Activated CD4-positive, alpha-beta memory T cell treated with anti-CD3 and anti-CD28 coated beads, Interleukin-2, amount 10 ng/mL, durations not matched to agents 7 days and 5 days (primary cell): ENCODE measurements at regions of chr11 and their contacts with region 1.

Region 1: DNA sequence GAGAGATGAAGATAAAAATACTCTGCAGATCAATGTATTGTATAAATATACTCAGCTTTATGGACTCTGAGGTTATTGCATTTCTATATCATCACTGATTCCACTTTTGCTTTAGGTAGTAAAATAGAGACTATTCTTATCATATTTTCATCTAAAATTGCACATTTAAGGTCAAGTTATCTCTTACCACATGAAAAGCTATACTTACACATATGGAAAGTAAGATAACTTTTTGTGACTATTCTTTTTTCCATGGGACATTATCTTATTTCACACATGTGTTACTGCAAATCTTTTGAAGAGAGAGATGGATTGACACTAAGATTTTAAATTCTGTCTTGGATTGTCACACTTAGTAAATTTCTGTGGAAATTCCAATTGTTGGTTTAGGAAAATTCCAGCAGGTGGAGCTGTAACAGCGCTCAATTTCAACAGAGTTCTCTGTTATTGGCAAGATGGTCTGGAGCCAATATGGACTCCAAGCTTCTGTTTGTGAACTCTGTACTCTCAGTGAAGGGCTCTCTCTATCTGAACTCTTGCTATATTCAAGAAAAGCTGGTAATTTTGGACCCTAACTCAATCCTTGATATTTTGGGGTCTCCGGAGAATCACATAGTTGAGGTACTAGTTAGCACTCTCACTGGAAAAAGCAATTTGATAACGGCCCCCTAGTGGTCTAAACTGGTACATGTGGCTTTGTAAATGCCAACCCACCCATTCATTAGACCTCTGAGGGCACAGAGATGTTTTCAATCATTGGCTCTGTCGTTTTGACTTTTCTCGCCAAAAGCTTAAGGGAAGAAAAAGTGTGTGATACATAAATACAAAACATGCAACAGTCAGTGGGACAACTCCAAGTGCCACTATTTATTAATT is 429.7 kb downstream of the ETS1 start:
- DNase-seq: peak; percentile 52
- H3K4me3 Mint-ChIP-seq: peak overlapping the region; percentile 53
- H3K27ac Mint-ChIP-seq: peak overlapping the region; percentile 55
- H3K4me1 Mint-ChIP-seq: peaks cover 7% of the 10 kb centered on the region
- H3K27me3 Mint-ChIP-seq: peaks cover 8% of the 10 kb centered on the region

Region 2: DNA sequence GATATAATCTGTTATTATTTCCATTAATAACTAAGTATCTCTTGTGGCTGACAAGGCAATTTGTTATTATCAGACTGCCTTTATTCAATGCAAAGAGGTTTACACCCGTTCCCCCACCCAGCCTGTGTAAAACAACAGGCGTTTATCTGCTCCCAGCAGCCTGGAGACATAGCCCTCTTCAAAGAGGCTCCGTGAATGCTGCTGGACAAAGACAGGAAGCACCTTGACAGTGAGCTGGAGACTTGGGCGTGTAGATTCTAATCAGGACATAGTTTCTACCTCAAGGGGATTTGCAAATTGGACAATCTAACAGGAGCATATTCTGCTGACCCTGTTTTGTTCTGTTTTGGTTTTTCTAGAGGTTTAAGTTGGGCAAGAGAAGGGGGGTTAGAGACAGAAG is 424.1 kb before region 1 on chr11:
- CTCF ChIA-PET with region 1: no interaction called
- POLR2A ChIA-PET with region 1: no interaction called
- DNase-seq: no peak
- H3K4me3 Mint-ChIP-seq: no peak overlapping the region
- H3K27ac Mint-ChIP-seq: no peak overlapping the region
- H3K4me1 Mint-ChIP-seq: no peaks in the 10 kb centered on the region
- H3K27me3 Mint-ChIP-seq: no peaks in the 10 kb centered on the region

Region 3: DNA sequence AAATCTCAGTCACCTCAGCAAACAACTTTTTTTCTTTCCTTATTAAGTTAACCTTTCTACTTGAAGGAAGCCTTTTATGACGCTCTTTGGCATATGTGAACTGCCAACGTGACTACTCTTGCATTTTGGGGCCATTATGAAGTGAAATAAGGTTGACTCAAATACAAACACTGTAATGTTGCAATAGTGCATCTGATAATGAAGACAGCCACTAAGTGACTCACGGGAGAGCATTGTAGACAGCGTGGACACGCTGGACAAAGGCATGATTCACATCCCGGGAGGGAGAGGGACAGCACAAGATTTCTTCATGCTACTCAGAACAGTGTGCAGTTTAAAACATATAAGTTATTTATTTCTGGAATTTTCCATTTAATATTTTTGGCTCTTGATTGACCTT is 131.1 kb before region 1 on chr11:
- CTCF ChIA-PET with region 1: interaction called, 53 read pairs
- POLR2A ChIA-PET with region 1: no interaction called
- DNase-seq: no peak
- H3K4me3 Mint-ChIP-seq: no peak overlapping the region
- H3K27ac Mint-ChIP-seq: no peak overlapping the region
- H3K4me1 Mint-ChIP-seq: peaks cover 16% of the 10 kb centered on the region
- H3K27me3 Mint-ChIP-seq: peaks cover 20% of the 10 kb centered on the region

Region 4: GRCh38 chr11:128052912-128053641 is 104.6 kb before region 1 on chr11:
- CTCF ChIA-PET with region 1: interaction called, 14 read pairs
- POLR2A ChIA-PET with region 1: interaction called, 3 read pairs
- DNase-seq: no peak
- H3K4me3 Mint-ChIP-seq: peak overlapping the region; percentile 53
- H3K27ac Mint-ChIP-seq: peak overlapping the region; percentile 83
- H3K4me1 Mint-ChIP-seq: peaks cover 52% of the 10 kb centered on the region
- H3K27me3 Mint-ChIP-seq: no peaks in the 10 kb centered on the region

Region 5: DNA sequence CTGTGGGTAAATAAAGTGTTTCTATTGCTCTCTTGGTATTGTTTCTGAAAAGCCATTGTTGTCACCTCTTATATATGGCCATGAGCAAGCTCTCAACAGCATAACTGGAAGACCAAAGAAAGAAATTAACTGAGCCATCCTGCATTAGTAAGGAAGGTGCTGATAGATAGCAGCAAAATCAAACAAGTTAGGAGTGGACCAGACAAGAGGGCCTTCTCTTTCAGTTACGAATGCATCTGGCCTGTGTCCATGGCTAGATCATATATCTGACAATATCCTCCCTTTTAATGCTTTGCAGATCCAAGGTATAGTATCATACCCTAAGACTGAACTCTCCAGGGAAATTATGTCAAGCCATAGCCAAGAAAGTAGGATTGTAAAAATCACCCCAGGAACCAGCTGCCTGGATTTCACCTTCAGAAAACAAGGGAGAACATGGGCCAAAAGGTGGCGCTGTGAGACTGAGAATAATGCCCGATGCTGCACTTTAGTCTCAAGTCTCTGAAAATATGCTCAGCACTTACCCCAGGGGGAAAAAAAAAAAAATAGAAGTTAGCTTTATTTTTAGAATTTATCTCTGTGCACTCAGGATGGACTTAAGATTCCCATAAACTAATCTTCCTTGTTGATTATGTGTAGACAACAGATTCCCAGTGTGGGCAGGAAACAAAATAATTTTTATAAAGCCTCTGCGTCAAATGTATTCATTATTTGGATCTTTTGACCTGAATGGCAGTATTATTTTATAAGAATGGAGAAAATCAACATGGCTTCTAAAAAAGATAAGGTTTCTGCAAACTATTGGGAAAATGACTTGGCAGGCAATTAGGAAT is 14.6 kb after region 1 on chr11:
- CTCF ChIA-PET with region 1: interaction called, 99 read pairs
- POLR2A ChIA-PET with region 1: no interaction called
- DNase-seq: peak; percentile 87
- H3K4me3 Mint-ChIP-seq: no peak overlapping the region
- H3K27ac Mint-ChIP-seq: no peak overlapping the region
- H3K4me1 Mint-ChIP-seq: peaks cover 13% of the 10 kb centered on the region
- H3K27me3 Mint-ChIP-seq: peaks cover 7% of the 10 kb centered on the region

Region 6: DNA sequence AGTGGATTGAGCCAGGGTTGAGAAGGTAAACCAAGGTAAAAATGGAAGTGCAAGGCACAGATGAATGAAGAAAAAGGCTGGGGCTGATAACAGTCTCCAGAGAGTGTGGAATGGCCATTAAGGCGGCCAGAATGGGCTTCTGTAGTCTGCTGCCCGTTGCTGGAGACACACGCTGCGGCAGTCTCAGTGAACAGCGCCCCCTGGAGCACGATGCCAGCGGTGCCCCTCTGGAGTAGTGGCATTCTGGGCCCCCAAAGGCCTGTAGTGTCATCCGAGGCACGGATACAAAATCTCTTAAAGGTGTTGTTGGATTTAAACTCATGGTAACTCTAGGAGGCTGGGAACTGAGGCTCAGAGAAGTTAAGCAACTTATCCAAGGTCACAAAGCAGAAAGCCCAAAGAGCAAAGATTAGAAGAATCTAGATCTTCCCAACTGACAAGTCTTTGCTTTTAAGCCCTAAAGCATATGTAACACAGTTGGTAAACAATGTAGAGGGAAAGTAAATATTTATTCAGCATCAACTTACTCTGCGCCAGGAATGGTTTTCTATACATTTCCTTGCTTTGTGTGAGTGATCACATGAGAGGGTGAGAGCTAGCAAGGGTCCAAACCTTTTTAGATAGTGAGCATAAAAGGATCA is 691.3 kb after region 1 on chr11:
- CTCF ChIA-PET with region 1: interaction called, 10 read pairs
- POLR2A ChIA-PET with region 1: no interaction called
- DNase-seq: peak; percentile 69
- H3K4me3 Mint-ChIP-seq: no peak overlapping the region
- H3K27ac Mint-ChIP-seq: no peak overlapping the region
- H3K4me1 Mint-ChIP-seq: peaks cover 28% of the 10 kb centered on the region
- H3K27me3 Mint-ChIP-seq: no peaks in the 10 kb centered on the region

Region 7: GRCh38 chr11:128867277-128867676 is 709.6 kb after region 1 on chr11 and contains the start of gene KCNJ1:
- CTCF ChIA-PET with region 1: interaction called, 12 read pairs
- POLR2A ChIA-PET with region 1: no interaction called
- DNase-seq: peak; percentile 48
- H3K4me3 Mint-ChIP-seq: no peak within 1 kb of the TSS
- H3K27ac Mint-ChIP-seq: no peak within 1 kb of the TSS
- H3K4me1 Mint-ChIP-seq: no peaks in the 10 kb centered on the region
- H3K27me3 Mint-ChIP-seq: peaks cover 14% of the 10 kb centered on the region
- total RNA-seq, gene KCNJ1: not detected